GM12878 (cell line): ENCODE measurements at regions of chr1 and their contacts with region 1.

Region 1: DNA sequence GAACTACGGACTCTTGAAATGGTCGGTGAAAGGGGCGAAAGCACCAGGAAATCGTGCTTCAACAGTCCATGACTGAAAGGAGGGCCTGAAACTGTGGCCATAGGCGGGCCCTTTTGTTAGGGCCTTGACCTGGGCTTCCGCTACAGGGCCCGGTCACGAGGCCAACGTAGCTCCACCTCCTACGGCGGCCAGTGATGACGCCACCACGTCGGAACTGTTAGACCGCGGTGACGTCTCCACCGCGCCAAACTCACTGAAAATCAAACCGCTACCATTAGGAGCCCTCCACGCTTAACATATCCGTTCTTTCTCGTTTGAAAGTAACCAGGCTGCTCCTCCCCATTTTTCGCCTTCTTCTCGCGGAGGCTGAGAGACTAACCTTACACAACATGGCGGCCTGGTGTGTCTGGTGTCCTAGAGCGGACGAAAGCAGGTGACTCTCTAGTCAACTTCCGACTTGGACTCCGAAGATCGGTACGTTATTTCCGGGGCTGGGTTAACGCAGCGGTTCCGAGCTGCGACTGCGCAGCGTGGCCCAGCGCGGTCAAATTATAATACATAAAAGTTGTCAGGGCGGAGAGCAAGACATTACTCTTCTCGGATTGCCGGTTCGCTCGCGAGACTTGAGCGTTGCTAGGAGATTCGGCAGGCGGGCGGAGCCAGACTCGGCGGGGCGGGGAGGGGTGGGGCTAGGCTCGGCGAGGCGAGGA is 376 bp upstream of the CACYBP start:
- DNase-seq: peak; percentile 98
- ATAC-seq: peak; percentile 84
- H3K4me3 ChIP-seq: peak overlapping the region; percentile 74
- H3K27ac ChIP-seq: peak overlapping the region; percentile 99
- H3K4me1 ChIP-seq: peaks cover 9% of the 10 kb centered on the region
- H3K27me3 ChIP-seq: no peaks in the 10 kb centered on the region
- CTCF ChIP-seq: no peak
- EP300 ChIP-seq: no peak
- POLR2A ChIP-seq: peak; percentile 96
- RAD21 ChIP-seq: no peak

Region 2: GRCh38 chr1:174159252-174160108 is 839.9 kb before region 1 on chr1 and contains the start of gene RABGAP1L:
- CTCF ChIA-PET with region 1: no interaction called
- POLR2A ChIA-PET with region 1: no interaction called
- RAD21 ChIA-PET with region 1: no interaction called
- SMC1A ChIA-PET with region 1: no interaction called
- in situ Hi-C with region 1: no loop called
- intact Hi-C with region 1: loop called (anchors 5 kb)
- DNase-seq: peak; percentile 55
- ATAC-seq: peak; percentile 84
- H3K4me3 ChIP-seq: peak within 1 kb of the TSS; percentile 91
- H3K27ac ChIP-seq: peak within 1 kb of the TSS; percentile 93
- H3K4me1 ChIP-seq: peaks cover 31% of the 10 kb centered on the region
- H3K27me3 ChIP-seq: no peaks in the 10 kb centered on the region; a peak in 1 of 4 replicates
- CTCF ChIP-seq: no peak
- EP300 ChIP-seq: no peak
- POLR2A ChIP-seq: peak; percentile 96
- RAD21 ChIP-seq: 0 out of 2 replicates have a peak, but pooled peaks have one; percentile 6
- polyA plus RNA-seq, gene RABGAP1L: 92.3 to 130 TPM

Region 3: GRCh38 chr1:174769961-174770549 is 229.3 kb before region 1 on chr1:
- CTCF ChIA-PET with region 1: interaction called, 27 read pairs
- POLR2A ChIA-PET with region 1: interaction called, 3 read pairs
- RAD21 ChIA-PET with region 1: interaction called, 8 read pairs
- SMC1A ChIA-PET with region 1: interaction called, 7 read pairs
- in situ Hi-C with region 1: loop called (anchors 5 kb)
- intact Hi-C with region 1: loop called (anchors 1 kb)
- DNase-seq: peak; percentile 17
- ATAC-seq: peak; percentile 71
- H3K4me3 ChIP-seq: no peak overlapping the region
- H3K27ac ChIP-seq: no peak overlapping the region
- H3K4me1 ChIP-seq: no peaks in the 10 kb centered on the region
- H3K27me3 ChIP-seq: no peaks in the 10 kb centered on the region
- CTCF ChIP-seq: peak; percentile 54 to 80 (median 61)
- EP300 ChIP-seq: no peak
- POLR2A ChIP-seq: no peak
- RAD21 ChIP-seq: peak; percentile 82

Region 4: DNA sequence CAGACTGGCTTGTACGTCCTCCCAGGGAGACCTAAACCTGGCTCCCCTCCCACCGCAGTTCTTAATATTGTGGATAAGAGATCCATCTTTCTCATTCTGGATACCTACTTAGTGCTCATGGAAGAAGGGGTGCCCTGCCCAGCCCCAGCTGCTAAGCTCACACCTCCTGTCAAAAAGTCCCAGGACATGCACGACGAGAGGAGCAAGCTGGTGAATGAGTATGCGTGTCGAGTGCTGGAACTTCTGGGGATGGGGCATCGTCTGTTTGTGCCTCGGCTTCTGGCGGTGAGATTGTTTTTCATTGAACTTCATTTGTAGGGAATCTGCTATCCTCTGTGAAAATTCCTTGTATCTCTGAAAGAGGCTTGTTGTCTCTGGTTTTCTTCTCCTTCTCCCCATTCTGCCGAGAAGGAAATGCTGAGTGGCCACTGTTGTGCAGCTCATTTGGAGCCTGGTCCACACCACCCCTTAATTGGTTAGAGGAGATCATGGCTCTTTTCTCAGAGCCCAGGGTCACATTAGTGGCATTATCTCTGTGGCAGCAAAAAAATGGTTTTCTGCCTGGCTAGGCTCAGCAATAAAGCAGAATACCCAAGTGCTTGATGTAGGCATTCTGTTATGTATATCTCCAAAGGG is 199.0 kb before region 1 on chr1:
- CTCF ChIA-PET with region 1: interaction called, 10 read pairs
- POLR2A ChIA-PET with region 1: interaction called, 7 read pairs
- RAD21 ChIA-PET with region 1: interaction called, 16 read pairs
- SMC1A ChIA-PET with region 1: interaction called, 10 read pairs
- in situ Hi-C with region 1: no loop called
- intact Hi-C with region 1: no loop called
- DNase-seq: no peak
- ATAC-seq: peak; percentile 21
- H3K4me3 ChIP-seq: peak overlapping the region; percentile 79
- H3K27ac ChIP-seq: peak overlapping the region; percentile 77
- H3K4me1 ChIP-seq: peaks cover 23% of the 10 kb centered on the region
- H3K27me3 ChIP-seq: no peaks in the 10 kb centered on the region
- CTCF ChIP-seq: no peak
- EP300 ChIP-seq: no peak
- POLR2A ChIP-seq: no peak
- RAD21 ChIP-seq: no peak

Region 5: DNA sequence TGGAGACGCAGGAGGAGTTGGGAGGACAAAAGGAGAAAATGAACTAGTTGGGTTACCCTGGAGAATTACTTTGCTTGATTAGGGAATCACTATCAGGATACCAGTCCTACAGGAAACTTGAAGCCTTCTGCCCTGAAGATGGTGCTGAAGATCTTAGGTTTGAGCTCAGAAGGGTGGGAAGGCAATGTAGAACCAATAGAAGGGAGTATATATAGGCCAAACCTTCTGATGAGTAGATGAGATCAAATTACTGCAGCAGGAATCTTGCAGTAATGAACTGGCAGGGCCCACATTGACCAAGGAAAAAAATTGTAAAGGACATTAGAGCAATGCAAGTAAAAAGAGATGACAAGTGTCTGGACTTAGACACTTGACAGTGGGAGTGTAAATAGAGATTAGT is 116.0 kb before region 1 on chr1:
- CTCF ChIA-PET with region 1: interaction called, 30 read pairs
- POLR2A ChIA-PET with region 1: no interaction called
- RAD21 ChIA-PET with region 1: interaction called, 4 read pairs
- SMC1A ChIA-PET with region 1: interaction called, 8 read pairs
- in situ Hi-C with region 1: no loop called
- intact Hi-C with region 1: loop called (anchors 1 kb)
- DNase-seq: no peak
- ATAC-seq: peak; percentile 43; the same call in 2 of the 3 replicates
- H3K4me3 ChIP-seq: no peak overlapping the region
- H3K27ac ChIP-seq: no peak overlapping the region
- H3K4me1 ChIP-seq: no peaks in the 10 kb centered on the region
- H3K27me3 ChIP-seq: no peaks in the 10 kb centered on the region
- CTCF ChIP-seq: peak in 2 of 3 experiments; percentile 10 to 46; a peak in 2 of 6 replicates
- EP300 ChIP-seq: no peak
- POLR2A ChIP-seq: no peak
- RAD21 ChIP-seq: peak; percentile 44; the same call in 1 of the 2 replicates

Region 6: GRCh38 chr1:174968750-174969244 is 30.6 kb before region 1 on chr1:
- CTCF ChIA-PET with region 1: interaction called, 8 read pairs
- POLR2A ChIA-PET with region 1: interaction called, 13 read pairs
- RAD21 ChIA-PET with region 1: interaction called, 26 read pairs
- SMC1A ChIA-PET with region 1: interaction called, 27 read pairs
- in situ Hi-C with region 1: no loop called
- intact Hi-C with region 1: loop called (anchors 1 kb)
- DNase-seq: peak; percentile 79
- ATAC-seq: peak; percentile 78
- H3K4me3 ChIP-seq: no peak overlapping the region
- H3K27ac ChIP-seq: no peak overlapping the region
- H3K4me1 ChIP-seq: peaks cover 36% of the 10 kb centered on the region
- H3K27me3 ChIP-seq: no peaks in the 10 kb centered on the region
- CTCF ChIP-seq: no peak
- EP300 ChIP-seq: peak; percentile 93 to 95
- POLR2A ChIP-seq: no peak
- RAD21 ChIP-seq: no peak

Region 7: DNA sequence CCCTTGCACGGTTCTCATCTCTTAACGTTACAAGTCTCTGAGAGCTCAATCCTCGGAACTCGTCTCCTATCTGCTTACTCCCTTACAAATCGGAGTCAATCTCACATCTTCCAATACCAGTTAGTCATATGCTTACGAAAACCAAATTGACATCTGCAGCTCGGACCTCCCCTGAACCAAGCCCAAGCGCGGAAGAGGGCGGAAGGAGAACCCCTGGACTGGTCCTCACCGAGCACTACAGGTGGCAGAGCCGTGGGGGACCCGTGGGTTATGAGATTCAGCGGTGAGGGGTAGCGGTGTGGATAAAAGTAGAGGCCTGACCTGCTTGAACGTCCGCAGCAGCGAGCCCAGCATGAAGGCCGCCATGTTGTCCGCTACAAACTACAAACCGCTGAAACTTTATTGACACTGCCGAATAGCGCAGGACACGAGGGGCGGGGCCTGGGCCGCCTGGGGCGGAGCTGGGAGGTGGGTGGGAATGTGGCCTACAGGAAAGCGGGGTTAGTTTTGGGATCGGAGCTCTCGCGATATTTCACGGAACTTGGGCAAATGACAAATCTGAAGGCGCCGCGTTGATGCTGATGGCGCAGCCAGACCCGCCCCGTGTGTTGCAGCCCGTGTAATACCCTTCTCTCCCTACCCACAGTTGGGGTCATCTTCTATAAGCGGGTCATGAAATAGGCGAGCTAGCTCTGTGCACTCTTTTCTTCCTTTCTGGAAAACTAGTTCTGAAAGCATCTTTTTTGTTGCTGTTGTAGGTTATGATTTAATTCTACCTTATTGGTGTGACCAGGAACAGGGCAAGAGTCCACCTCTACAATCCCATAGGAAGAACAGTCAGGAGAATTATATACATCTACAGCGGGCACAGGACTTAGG is 23.9 kb after region 1 on chr1 and contains the start of gene MRPS14:
- CTCF ChIA-PET with region 1: interaction called, 12 read pairs
- POLR2A ChIA-PET with region 1: interaction called, 45 read pairs
- RAD21 ChIA-PET with region 1: interaction called, 58 read pairs
- SMC1A ChIA-PET with region 1: interaction called, 33 read pairs
- in situ Hi-C with region 1: no loop called
- intact Hi-C with region 1: loop called (anchors 1 kb)
- DNase-seq: peak; percentile 95
- ATAC-seq: peak; percentile 98
- H3K4me3 ChIP-seq: peak within 1 kb of the TSS; percentile 89
- H3K27ac ChIP-seq: peak within 1 kb of the TSS; percentile 90
- H3K4me1 ChIP-seq: no peaks in the 10 kb centered on the region; the same call in 1 of the 2 replicates
- H3K27me3 ChIP-seq: no peaks in the 10 kb centered on the region
- CTCF ChIP-seq: no peak
- EP300 ChIP-seq: no peak
- POLR2A ChIP-seq: peak; percentile 90
- RAD21 ChIP-seq: no peak
- polyA plus RNA-seq, gene MRPS14: 223 to 224 TPM